ENCODE measurements at regions of chr4 and their contacts with region 1.

Region 1: DNA sequence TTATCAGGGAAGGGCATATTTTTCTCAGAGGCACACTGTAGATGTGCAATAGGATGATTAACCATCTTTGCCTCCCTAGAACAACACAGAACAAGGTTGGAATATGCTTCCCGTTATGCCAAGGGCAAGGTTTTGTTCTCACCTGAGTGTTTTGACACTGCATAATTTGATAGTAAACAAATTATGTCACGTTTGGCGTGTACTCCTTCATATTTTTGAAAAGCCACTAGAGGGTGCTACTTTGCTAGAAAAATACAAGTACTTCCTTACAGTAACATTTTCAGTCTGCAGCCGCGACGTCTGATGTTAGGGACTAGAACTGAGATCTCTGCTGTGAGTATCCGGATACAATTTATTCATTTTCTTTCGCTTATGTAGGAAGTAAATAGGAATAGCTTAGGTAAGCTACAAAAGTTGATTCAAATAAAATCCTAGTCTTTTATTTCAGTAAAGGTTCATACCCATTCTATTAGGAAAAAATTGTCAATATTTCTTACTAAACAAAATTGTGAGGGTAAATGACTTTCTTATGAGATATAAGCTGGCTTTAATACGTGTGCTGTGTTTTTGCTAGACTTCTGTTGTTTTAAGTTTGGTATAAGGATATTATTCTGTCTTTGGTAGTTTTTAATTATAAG is 181.1 kb upstream of the WDFY3 start:
- DNase-seq: peak; percentile 26 to 56
- ATAC-seq: peak; percentile 78

Region 2: DNA sequence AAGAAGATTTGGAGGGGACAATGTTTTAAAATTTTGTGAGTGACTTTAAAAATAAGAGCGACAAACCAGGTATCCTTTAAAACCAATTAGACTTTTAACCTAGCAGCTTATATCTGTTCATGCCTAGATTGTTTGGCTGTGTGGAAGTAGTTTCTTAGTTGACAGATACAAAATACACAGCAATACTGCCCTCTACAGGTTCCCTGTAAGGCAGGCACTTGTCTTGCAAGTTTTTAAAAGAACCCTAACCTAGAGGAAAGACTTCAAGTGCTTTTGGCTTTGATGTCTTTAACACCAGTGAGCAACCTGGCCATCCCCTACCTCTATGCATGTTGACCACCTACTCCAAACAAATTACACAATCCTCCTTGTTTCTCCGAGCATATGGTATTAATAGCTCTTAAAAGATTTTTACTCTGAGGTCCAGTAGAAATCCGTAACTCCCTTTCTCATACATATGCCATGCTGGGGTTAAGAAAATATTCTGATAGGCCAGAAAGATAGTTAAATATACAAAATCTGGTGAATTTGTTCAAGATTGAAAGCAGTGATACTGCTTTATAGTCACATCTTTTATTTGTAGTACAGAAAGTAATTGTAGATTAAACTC is 600.4 kb after region 1 on chr4:
- intact Hi-C with region 1: loop called in 1 of 2 experiments (anchors 2 kb)
- DNase-seq: no peak
- ATAC-seq: peak; percentile 84

Region 3: GRCh38 chr4:85968945-85969819 is 821.6 kb after region 1 on chr4:
- intact Hi-C with region 1: loop called in 1 of 2 experiments (anchors 5 kb)
- DNase-seq: no peak
- ATAC-seq: peak; percentile 63